IMR-90 (cell line): ENCODE measurements at regions of chr4 and their contacts with region 1.

Region 1: DNA sequence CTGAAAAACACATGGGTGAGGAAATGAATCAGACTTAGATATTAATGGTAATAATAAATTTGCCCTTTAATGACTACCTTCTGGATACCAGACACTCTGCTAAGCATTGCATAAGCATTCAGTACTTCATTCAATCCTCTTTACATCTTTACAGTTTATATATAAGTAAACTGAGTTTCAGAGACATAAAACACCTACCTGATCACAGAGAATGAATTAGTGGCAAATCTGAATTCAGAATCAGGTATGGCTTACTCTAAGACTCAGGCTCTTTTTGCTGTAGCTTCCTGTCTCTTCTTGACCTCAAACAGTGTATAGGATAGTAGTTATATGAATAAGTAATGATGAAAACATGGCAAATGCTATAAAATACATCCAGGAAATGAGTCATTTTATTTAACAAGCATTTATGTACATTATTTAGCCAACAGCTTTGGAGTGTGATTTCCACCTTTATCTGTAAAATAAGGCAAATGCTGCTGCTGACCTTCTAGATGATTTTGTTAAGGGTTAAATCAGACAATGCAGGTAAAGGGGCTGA is 83.9 kb downstream of the VEGFC start:
- DNase-seq: no peak
- ATAC-seq: no peak; the same call in 1 of the 2 replicates
- H3K4me3 ChIP-seq: no peak overlapping the region
- H3K27ac ChIP-seq: no peak overlapping the region
- H3K4me1 ChIP-seq: peaks cover 2% of the 10 kb centered on the region; the same call in 1 of the 2 replicates
- H3K27me3 ChIP-seq: no peaks in the 10 kb centered on the region
- CTCF ChIP-seq: no peak
- POLR2A ChIP-seq: no peak
- RAD21 ChIP-seq: no peak

Region 2: GRCh38 chr4:176286728-176287127 is 422.1 kb before region 1 on chr4:
- CTCF ChIA-PET with region 1: no interaction called
- POLR2A ChIA-PET with region 1: no interaction called
- dilution Hi-C with region 1: no loop called
- in situ Hi-C with region 1: no loop called
- intact Hi-C with region 1: no loop called
- DNase-seq: peak; percentile 35
- ATAC-seq: peak; percentile 78
- H3K4me3 ChIP-seq: no peak overlapping the region
- H3K27ac ChIP-seq: peak overlapping the region; percentile 69; the same call in 1 of the 2 replicates
- H3K4me1 ChIP-seq: peaks cover 6% of the 10 kb centered on the region
- H3K27me3 ChIP-seq: no peaks in the 10 kb centered on the region
- CTCF ChIP-seq: no peak
- POLR2A ChIP-seq: no peak
- RAD21 ChIP-seq: no peak

Region 3: GRCh38 chr4:176910646-176911045 is 201.8 kb after region 1 on chr4:
- CTCF ChIA-PET with region 1: no interaction called
- POLR2A ChIA-PET with region 1: interaction called, 12 read pairs
- dilution Hi-C with region 1: no loop called
- in situ Hi-C with region 1: no loop called
- intact Hi-C with region 1: no loop called
- DNase-seq: no peak
- ATAC-seq: no peak
- H3K4me3 ChIP-seq: no peak overlapping the region
- H3K27ac ChIP-seq: no peak overlapping the region
- H3K4me1 ChIP-seq: peaks cover 1% of the 10 kb centered on the region; the same call in 1 of the 2 replicates
- H3K27me3 ChIP-seq: no peaks in the 10 kb centered on the region
- CTCF ChIP-seq: no peak
- POLR2A ChIP-seq: no peak
- RAD21 ChIP-seq: no peak